ENCODE measurements at regions of chr1 and their contacts with region 1.

Region 1: GRCh38 chr1:167220537-167221125 is at the start of gene POU2F1:
- DNase-seq: peak; percentile 98
- ATAC-seq: peak; percentile 73
- H3K4me3 Mint-ChIP-seq: peak within 1 kb of the TSS; percentile 93
- H3K27ac Mint-ChIP-seq: peak within 1 kb of the TSS; percentile 100
- H3K4me1 Mint-ChIP-seq: peaks cover 50% of the 10 kb centered on the region
- H3K27me3 Mint-ChIP-seq: peaks cover 6% of the 10 kb centered on the region; the same call in 1 of the 2 replicates
- CTCF ChIP-seq: peak; percentile 31; the same call in 1 of the 2 replicates
- total RNA-seq, gene POU2F1: 51.0 to 55.0 TPM (median 51.3 TPM) in 3 replicates

Region 2: DNA sequence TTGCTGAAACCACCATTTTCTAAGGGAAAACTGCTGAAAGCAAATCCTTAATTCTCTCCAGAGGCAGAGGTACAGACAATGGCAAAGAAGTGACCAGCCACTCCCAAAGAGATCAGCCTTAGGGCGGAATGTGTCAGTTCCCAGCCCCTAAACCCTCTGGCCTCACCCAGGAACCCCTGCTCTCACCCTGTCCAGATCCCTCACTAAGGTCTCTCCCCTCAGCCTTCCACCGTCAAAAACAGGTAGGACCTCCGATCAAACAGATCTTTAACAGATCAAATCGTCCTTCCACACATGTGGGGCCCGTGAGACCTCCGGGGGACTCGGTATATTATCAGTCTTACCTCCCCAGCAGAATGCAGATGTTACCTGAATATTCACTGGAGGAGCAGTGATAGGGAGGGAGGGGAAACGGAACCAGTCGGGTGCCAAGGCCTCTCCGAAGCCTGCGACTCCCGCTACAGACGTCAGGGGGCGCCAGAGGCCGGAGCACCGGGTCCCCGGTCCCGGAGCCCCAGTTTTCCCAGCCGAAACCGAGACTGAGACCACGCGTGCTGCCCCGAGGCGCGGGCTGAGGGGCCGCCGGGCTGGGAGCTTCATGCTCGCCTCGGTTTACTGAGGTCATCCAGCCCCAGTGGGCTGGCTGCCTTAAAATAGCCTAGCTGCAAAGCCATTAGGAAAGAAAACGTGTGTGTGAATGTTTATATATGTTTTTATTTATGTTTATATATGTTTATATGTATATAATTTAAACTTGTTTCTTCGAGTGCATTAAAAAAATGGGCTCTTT is 154.1 kb before region 1 on chr1:
- CTCF ChIA-PET with region 1: interaction called, 69 read pairs
- POLR2A ChIA-PET with region 1: interaction called, 8 read pairs
- DNase-seq: peak; percentile 91
- ATAC-seq: peak; percentile 94
- H3K4me3 Mint-ChIP-seq: peak overlapping the region; percentile 55
- H3K27ac Mint-ChIP-seq: 0 out of 2 replicates have a peak overlapping the region, but pooled peaks have one; percentile 84
- H3K4me1 Mint-ChIP-seq: peaks cover 9% of the 10 kb centered on the region
- H3K27me3 Mint-ChIP-seq: no peaks in the 10 kb centered on the region; the same call in 1 of the 2 replicates
- CTCF ChIP-seq: peak; percentile 97

Region 3: GRCh38 chr1:167136191-167136614 is 84.4 kb before region 1 on chr1:
- CTCF ChIA-PET with region 1: interaction called, 19 read pairs
- POLR2A ChIA-PET with region 1: interaction called, 5 read pairs
- DNase-seq: no peak
- ATAC-seq: peak; percentile 60
- H3K4me3 Mint-ChIP-seq: no peak overlapping the region
- H3K27ac Mint-ChIP-seq: 0 out of 2 replicates have a peak overlapping the region, but pooled peaks have one; percentile 19
- H3K4me1 Mint-ChIP-seq: peaks cover 57% of the 10 kb centered on the region
- H3K27me3 Mint-ChIP-seq: no peaks in the 10 kb centered on the region; the same call in none of the 2 replicates
- CTCF ChIP-seq: no peak

Region 4: GRCh38 chr1:167173516-167174184 is 47.0 kb before region 1 on chr1:
- CTCF ChIA-PET with region 1: interaction called, 5 read pairs
- POLR2A ChIA-PET with region 1: interaction called, 11 read pairs
- DNase-seq: no peak
- ATAC-seq: no peak
- H3K4me3 Mint-ChIP-seq: no peak overlapping the region
- H3K27ac Mint-ChIP-seq: no peak overlapping the region
- H3K4me1 Mint-ChIP-seq: peaks cover 20% of the 10 kb centered on the region
- H3K27me3 Mint-ChIP-seq: no peaks in the 10 kb centered on the region; the same call in 1 of the 2 replicates
- CTCF ChIP-seq: no peak

Region 5: DNA sequence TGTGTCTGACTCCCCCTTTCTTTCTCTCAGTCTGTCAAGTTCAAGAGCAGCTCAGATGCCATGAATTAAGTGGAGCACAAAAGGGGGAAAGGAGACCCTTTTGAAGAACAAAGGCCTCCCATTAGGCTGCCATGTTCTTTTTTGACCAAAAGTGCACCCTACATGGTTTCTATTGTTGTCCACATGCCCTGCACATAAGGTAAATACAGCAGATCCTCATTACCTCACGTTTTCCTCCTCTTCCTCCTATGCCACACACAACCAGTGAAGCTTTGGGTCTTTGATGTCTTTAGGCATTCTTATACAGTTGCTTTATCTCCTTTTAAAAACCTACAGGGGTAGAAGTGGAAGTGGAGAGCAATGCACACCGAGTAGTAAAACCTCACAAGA is 47.8 kb after region 1 on chr1:
- CTCF ChIA-PET with region 1: interaction called, 12 read pairs
- POLR2A ChIA-PET with region 1: interaction called, 4 read pairs
- DNase-seq: no peak
- ATAC-seq: no peak
- H3K4me3 Mint-ChIP-seq: peak overlapping the region; percentile 12; the same call in 1 of the 2 replicates
- H3K27ac Mint-ChIP-seq: peak overlapping the region; percentile 71
- H3K4me1 Mint-ChIP-seq: peaks cover 51% of the 10 kb centered on the region
- H3K27me3 Mint-ChIP-seq: no peaks in the 10 kb centered on the region
- CTCF ChIP-seq: no peak

Region 6: GRCh38 chr1:167489571-167490340 is 269.1 kb after region 1 on chr1:
- CTCF ChIA-PET with region 1: interaction called, 10 read pairs
- POLR2A ChIA-PET with region 1: no interaction called
- DNase-seq: peak; percentile 59
- ATAC-seq: peak; percentile 84
- H3K4me3 Mint-ChIP-seq: peak overlapping the region; percentile 49
- H3K27ac Mint-ChIP-seq: peak overlapping the region; percentile 91
- H3K4me1 Mint-ChIP-seq: peaks cover 56% of the 10 kb centered on the region
- H3K27me3 Mint-ChIP-seq: peaks cover 4% of the 10 kb centered on the region
- CTCF ChIP-seq: no peak

Region 7: DNA sequence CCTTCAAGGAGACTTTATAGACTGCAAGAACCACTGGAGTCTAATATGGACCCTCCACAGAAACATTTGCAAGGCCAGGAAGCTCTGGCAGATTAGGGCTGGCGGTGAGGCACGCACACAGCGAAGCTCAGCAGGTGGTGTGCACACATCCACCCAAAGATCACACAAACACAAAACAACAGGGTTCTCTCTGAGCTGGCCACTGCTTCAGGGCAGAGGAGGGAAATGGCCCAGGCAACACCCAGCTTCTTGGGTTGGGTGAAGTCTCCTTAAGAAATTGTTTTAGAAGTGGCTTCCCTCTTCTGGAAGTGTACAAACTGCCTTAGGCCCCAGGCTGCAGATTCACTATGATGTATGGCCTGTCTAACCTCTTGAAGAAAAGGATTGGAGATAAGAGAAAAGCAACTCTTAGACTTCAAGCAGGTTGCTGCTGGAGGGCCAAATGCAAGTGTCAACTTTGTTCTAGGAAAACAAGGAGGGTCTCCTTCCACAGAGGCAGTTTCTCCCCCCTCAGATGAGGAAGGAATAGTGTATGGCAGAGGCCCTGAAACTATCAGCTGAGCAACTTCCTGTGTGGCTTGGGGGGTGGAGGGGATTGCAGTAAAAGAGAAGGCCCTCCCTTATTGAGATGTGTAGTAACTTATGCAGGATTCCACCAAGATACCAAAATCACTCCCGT is 411.4 kb after region 1 on chr1:
- CTCF ChIA-PET with region 1: no interaction called
- POLR2A ChIA-PET with region 1: no interaction called
- DNase-seq: no peak
- ATAC-seq: no peak
- H3K4me3 Mint-ChIP-seq: no peak overlapping the region
- H3K27ac Mint-ChIP-seq: no peak overlapping the region
- H3K4me1 Mint-ChIP-seq: peaks cover 45% of the 10 kb centered on the region
- H3K27me3 Mint-ChIP-seq: peaks cover 92% of the 10 kb centered on the region
- CTCF ChIP-seq: no peak